ENCODE measurements at regions of chr9 and their contacts with region 1.

Region 1: DNA sequence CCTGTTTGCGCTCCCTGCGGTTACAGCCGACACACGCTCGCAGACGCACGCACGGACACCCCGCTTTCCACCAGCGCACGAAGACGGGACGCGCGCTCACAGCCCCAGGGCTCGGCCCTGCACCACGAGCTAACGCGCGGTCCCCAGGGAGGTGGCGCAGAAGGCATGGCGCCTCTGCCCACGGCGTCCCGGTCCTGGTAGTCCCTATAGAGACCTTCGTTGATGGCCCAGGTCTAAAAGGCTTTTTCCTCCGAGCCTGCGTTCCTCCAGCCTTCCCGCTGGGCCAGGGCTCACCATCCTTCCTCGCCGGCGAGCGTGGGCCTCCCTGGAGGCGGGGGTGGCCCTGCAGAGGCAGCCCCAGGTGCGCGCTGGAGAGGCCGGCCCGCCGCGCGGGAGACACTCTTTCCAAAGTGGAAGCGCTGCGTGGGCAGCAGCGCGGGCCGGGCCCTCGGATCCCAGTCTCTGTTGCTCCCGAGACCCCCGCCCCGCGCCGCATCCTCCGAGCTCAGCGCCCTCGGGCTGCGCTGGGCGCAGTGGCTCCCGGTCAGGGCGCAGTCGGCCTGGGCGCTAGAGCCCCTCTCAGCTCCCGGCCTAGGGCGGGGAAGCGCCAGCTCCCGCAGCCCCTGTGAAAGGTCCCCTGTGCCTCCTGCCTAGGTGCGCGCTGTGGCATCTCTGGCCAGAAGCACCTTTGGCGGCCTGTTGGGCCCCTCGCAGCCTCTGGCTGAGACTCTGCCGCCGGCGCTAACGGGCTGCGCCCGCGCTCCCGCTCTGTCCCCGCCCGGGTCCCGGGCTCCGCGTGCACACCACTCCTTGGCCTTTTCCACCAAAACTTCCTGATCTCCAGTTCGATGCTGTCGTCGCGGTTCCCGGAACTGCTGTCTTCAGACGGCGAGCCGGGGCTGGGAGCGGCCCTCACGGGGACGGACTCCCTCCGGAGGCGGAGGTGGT is 31.9 kb upstream of the FANCC start:
- DNase-seq: no peak
- ATAC-seq: no peak
- H3K4me3 ChIP-seq: no peak overlapping the region
- H3K27ac ChIP-seq: no peak overlapping the region
- H3K4me1 ChIP-seq: no peaks in the 10 kb centered on the region
- CTCF ChIP-seq: no peak
- EP300 ChIP-seq: no peak
- POLR2A ChIP-seq: no peak
- RAD21 ChIP-seq: no peak

Region 2: DNA sequence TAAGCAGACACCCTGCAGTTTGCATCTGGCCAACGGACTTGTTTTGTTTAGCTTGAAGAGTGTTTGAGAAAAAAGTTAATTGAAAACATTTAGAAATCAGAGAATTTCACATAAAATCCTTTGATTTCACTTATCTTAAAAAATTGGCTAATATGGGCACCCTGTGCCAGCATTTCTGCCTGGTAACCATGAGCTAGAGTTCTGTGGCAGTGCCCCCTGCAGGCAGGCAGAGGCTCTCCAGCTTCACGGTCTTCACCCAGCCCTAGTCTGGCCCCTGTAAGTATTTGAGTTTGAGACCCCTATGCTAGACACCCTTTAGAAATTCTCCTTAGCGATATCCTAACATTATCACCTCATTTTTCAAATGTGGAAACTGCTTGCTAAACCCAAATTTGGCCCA is 13.1 kb before region 1 on chr9:
- CTCF ChIA-PET with region 1: interaction called, 12 read pairs
- POLR2A ChIA-PET with region 1: no interaction called
- DNase-seq: peak in 1 of 2 experiments; percentile 49
- ATAC-seq: peak; percentile 77 to 87; a peak in 4 of 6 replicates
- H3K4me3 ChIP-seq: no peak overlapping the region
- H3K27ac ChIP-seq: no peak overlapping the region
- H3K4me1 ChIP-seq: no peaks in the 10 kb centered on the region
- CTCF ChIP-seq: peak; percentile 45
- EP300 ChIP-seq: no peak
- POLR2A ChIP-seq: no peak
- RAD21 ChIP-seq: peak; percentile 32 to 39; a peak in 4 of 5 replicates